ENCODE measurements at regions of chr10 and their contacts with region 1.

Region 1: DNA sequence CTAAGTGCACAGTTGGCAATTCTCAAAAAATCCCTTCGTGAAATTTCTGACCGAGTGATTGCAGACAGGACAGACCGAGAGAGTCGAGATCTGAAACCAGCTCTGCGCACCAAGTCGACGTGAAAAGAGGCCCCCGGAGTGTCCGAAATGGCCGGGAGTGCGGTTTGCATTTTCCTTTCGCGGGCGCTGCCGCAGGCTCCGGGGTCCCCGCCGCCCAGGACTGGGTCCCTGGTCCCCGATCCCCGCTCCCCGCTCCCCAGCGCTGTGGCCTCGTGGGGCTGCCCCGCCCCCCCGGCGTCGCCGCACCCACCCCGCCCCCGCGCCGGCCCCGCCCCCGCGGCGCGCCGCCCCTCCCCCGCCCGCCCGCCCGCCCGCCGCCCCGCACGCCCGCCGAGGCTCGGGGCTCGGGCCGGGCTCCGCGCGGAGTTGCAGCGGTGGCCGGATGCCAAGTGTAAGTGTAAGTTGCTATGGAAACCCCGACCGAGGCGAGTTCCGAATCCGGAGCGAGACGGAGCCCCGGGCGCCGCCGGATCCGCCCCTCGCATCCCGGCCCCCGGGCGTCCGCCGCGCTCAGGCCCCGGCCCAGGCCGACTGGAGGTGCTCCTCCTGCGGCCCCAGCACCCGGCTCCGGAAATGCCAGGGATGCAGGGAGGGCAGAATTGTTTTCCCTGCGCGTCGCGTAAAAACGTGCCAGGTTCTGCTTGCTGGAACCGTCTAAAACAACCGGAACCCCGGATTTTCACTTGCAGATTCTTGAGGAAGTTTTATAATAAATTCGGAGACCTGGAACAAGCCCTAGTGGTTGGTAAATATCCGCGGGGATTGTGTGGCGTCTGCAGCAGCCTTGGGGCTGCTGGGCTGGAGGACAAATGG is 4.6 kb downstream of the BMI1 start:
- DNase-seq: peak; percentile 58
- ATAC-seq: peak; percentile 68
- H3K4me3 ChIP-seq: peak overlapping the region; percentile 61
- H3K27ac ChIP-seq: peak overlapping the region; percentile 36
- H3K4me1 ChIP-seq: no peaks in the 10 kb centered on the region; the same call in 1 of the 2 replicates
- H3K27me3 ChIP-seq: peaks cover 21% of the 10 kb centered on the region
- CTCF ChIP-seq: no peak
- POLR2A ChIP-seq: no peak
- RAD21 ChIP-seq: no peak

Region 2: DNA sequence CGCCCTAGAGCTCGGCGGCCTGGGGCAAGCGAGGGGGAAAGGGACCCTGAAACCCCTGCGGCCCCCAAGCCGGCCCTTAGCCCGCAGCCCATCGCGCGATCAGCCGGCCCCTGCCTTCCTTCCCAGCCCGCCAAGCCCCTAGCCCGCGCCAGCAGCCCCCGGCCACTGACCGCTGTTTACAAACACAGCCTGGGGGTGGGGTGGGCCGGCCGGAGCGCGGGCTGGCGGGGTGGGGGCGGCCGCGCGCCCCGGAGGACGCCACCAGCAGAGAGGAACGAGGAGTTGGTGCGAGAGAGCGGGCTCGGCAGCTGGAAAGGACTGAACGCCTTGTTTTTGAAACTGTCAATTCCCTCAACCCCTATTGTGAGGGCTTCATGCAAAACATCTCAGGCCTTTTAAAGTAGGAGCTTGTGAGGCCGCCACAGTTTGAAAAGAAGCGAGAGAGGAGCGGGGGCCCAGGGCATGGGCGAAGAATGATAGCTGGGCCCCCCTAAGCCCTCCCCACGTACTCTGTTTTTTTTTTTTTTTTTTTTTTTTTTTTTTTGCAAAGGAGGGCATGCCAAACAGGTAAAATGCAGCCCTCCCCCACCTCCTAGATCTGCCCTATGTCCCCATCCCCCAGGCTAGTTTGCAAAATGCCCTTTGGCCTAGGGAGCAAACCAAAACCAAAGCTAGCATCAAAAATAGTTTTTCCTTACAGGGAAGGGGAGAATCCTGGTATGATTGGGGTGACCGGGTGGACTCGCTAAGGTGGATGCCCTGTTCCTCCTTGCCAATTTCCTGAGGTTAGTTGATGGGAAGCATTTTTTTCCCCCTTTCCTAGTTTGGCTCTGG is 815.0 kb before region 1 on chr10:
- CTCF ChIA-PET with region 1: no interaction called
- POLR2A ChIA-PET with region 1: no interaction called
- dilution Hi-C with region 1: no loop called
- in situ Hi-C with region 1: loop called (anchors 25 kb)
- intact Hi-C with region 1: loop called (anchors 5 kb)
- DNase-seq: no peak
- ATAC-seq: peak; percentile 42
- H3K4me3 ChIP-seq: peak overlapping the region; percentile 15; the same call in 1 of the 2 replicates
- H3K27ac ChIP-seq: peak overlapping the region; percentile 32; the same call in 1 of the 2 replicates
- H3K4me1 ChIP-seq: peaks cover 5% of the 10 kb centered on the region; the same call in 1 of the 2 replicates
- H3K27me3 ChIP-seq: peaks cover 3% of the 10 kb centered on the region; the same call in 1 of the 2 replicates
- CTCF ChIP-seq: no peak
- POLR2A ChIP-seq: no peak
- RAD21 ChIP-seq: no peak

Region 3: GRCh38 chr10:22436884-22437619 is 111.5 kb after region 1 on chr10:
- CTCF ChIA-PET with region 1: no interaction called
- POLR2A ChIA-PET with region 1: no interaction called
- dilution Hi-C with region 1: no loop called
- in situ Hi-C with region 1: no loop called
- intact Hi-C with region 1: loop called (anchors 1 kb)
- DNase-seq: peak; percentile 89
- ATAC-seq: peak; percentile 83
- H3K4me3 ChIP-seq: peak overlapping the region; percentile 56
- H3K27ac ChIP-seq: peak overlapping the region; percentile 90
- H3K4me1 ChIP-seq: peaks cover 8% of the 10 kb centered on the region; the same call in 1 of the 2 replicates
- H3K27me3 ChIP-seq: peaks cover 7% of the 10 kb centered on the region
- CTCF ChIP-seq: no peak
- POLR2A ChIP-seq: peak; percentile 82; the same call in 1 of the 2 replicates
- RAD21 ChIP-seq: no peak

Region 4: GRCh38 chr10:22550732-22551131 is 225.2 kb after region 1 on chr10:
- CTCF ChIA-PET with region 1: no interaction called
- POLR2A ChIA-PET with region 1: no interaction called
- dilution Hi-C with region 1: no loop called
- in situ Hi-C with region 1: no loop called
- intact Hi-C with region 1: loop called (anchors 10 kb)
- DNase-seq: peak; percentile 4
- ATAC-seq: no peak
- H3K4me3 ChIP-seq: no peak overlapping the region
- H3K27ac ChIP-seq: no peak overlapping the region
- H3K4me1 ChIP-seq: peaks cover 3% of the 10 kb centered on the region; the same call in 1 of the 2 replicates
- H3K27me3 ChIP-seq: no peaks in the 10 kb centered on the region
- CTCF ChIP-seq: peak; percentile 46
- POLR2A ChIP-seq: no peak
- RAD21 ChIP-seq: peak; percentile 24; the same call in 1 of the 2 replicates

Region 5: GRCh38 chr10:22823109-22823508 is 497.6 kb after region 1 on chr10:
- CTCF ChIA-PET with region 1: no interaction called
- POLR2A ChIA-PET with region 1: no interaction called
- dilution Hi-C with region 1: no loop called
- in situ Hi-C with region 1: loop called (anchors 10 kb)
- intact Hi-C with region 1: no loop called
- DNase-seq: peak; percentile 85
- ATAC-seq: peak; percentile 79
- H3K4me3 ChIP-seq: no peak overlapping the region
- H3K27ac ChIP-seq: no peak overlapping the region
- H3K4me1 ChIP-seq: peaks cover 11% of the 10 kb centered on the region
- H3K27me3 ChIP-seq: no peaks in the 10 kb centered on the region
- CTCF ChIP-seq: no peak
- POLR2A ChIP-seq: no peak
- RAD21 ChIP-seq: no peak

Measured in IMR-90 (cell line).